ENCODE measurements at regions of chr14 and their contacts with region 1.

Region 1: DNA sequence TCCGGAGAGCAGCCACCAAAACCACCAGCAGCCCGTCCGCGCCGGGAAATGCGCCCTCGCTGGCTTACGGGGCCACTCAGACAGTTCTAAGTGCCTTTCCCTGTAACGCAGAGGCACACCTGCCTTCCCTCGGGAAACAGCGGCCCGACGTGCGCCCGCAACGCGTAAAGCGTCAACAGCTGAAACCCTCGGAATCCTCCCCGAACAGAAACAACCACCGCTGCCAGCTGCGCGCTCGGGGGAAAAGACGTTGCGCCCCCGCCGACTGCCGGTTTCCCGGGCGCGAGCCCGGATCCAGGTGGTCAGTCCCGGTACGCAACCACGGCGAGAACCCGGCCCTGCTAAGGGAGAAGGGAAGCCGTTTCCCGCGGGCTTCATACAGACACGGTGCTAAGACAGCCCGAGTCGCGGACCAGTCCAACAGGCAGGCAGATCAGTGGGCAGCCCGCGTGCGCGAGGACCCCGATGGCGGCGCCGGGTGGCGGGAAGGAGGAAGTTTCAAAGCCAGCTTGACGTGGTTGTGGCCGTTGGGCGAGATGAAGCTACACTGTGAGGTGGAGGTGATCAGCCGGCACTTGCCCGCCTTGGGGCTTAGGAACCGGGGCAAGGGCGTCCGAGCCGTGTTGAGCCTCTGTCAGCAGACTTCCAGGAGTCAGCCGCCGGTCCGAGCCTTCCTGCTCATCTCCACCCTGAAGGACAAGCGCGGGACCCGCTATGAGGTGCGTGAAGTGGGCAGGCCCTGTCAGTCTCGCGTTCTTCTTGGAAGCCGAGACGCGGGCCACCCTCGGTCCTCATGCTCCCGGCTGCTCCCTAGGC is at the start of gene LRR1:
- DNase-seq: peak; percentile 95
- ATAC-seq: peak; percentile 73
- H3K4me3 ChIP-seq: peak within 1 kb of the TSS; percentile 75 to 94 (median 80)
- H3K4me3 Mint-ChIP-seq: peak within 1 kb of the TSS; percentile 99
- H3K27ac ChIP-seq: peak within 1 kb of the TSS; percentile 92 to 97
- H3K27ac Mint-ChIP-seq: peak within 1 kb of the TSS; percentile 98
- H3K4me1 ChIP-seq: peaks cover 33 to 42% of the 10 kb centered on the region in 2 donors
- H3K4me1 Mint-ChIP-seq: peaks cover 55% of the 10 kb centered on the region
- H3K27me3 ChIP-seq: no peaks in the 10 kb centered on the region
- H3K27me3 Mint-ChIP-seq: no peaks in the 10 kb centered on the region
- CTCF ChIP-seq: no peak
- total RNA-seq, gene LRR1: 10.3 and 13.0 TPM in 2 replicates

Region 2: DNA sequence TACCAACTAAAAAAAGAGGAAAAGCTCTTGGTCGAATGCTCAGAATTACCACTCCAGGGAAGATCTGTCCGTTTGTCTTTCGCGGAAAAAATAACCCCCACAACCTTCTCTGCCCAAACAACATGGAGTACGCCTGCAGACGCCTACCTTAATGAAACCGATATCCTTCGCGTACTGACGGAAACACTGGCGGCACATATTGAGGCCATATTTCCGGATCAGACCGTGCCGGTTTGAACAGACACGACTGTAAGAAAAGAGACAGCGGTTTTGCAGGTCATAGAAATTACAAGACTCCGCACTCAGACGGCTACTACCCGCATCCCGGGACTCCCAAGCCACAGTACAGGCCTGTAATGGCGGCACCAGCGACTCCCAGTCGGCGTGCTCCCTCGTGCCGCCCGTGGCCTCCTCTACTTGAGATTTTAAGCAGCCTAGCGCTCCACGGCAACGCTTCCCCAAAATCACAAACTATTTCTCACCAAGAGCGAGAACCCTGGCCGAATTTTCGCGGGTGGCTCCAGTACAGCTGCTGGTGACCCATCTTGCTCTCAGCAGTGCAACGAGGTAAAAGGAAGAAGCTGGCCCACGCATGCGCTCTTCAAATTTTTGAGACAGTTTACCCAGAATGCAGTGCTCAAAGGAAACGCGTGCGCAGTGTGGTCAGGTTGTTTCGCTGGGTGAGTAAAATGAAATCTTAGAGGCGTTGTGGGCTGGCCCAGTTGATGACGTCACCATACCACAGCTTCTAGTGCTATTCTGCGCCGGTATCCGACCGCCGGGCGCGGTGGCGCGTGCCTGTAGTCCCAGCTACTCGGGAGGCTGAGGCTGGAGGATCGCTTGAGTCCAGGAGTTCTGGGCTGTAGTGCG is 12.7 kb before region 1 on chr14 and contains the start of gene RPS29:
- CTCF ChIA-PET with region 1: interaction called, 92 read pairs
- POLR2A ChIA-PET with region 1: interaction called, 43 read pairs
- intact Hi-C with region 1: loop called (anchors 1 kb)
- DNase-seq: peak; percentile 100
- ATAC-seq: peak; percentile 86
- H3K4me3 ChIP-seq: peak within 1 kb of the TSS; percentile 70 to 100 (median 88)
- H3K4me3 Mint-ChIP-seq: peak within 1 kb of the TSS; percentile 88
- H3K27ac ChIP-seq: peak within 1 kb of the TSS; percentile 88 to 95
- H3K27ac Mint-ChIP-seq: peak within 1 kb of the TSS; percentile 100
- H3K4me1 ChIP-seq: peaks cover 17 to 24% of the 10 kb centered on the region in 2 donors
- H3K4me1 Mint-ChIP-seq: peaks cover 46% of the 10 kb centered on the region
- H3K27me3 ChIP-seq: no peaks in the 10 kb centered on the region
- H3K27me3 Mint-ChIP-seq: no peaks in the 10 kb centered on the region
- CTCF ChIP-seq: no peak
- total RNA-seq, gene RPS29: 2,497 and 2,873 TPM in 2 replicates

Region 3: DNA sequence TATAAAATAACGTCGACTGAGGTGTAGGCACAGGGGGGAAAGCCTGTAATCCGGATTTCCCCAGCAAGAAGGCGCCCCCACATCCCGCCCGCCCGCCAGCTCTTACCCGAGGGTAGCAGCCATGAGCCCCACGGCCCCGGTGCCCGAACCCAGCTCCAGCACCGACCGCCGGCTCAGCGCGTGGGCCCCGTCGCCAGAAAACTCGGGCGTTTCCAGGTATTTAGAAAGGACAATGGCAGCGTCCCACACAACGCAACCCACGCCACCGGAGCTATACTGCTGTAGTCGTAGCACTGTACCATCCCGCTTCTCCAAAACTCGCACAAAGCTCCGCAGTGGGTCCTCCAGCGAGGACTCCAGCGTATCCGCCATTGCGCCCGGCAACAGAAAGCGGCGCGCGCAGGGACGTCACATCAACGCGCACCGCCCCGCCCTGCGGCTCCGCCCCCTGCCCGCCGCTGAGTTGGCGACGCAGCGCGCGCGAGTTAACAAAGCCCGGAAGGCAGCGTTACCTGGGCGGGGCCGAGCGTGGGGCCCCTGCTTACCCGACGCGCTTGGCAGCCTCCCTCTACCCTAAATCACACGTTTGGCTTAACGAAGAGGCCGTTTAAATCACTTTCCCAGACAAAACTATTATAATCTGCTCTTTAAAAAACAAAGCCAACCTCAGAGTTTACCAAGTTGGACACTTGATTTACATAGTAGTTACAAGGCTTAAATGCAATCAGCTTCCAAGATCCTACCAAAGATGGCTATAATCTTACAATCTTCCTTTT is 517.7 kb after region 1 on chr14 and contains the start of gene VCPKMT:
- CTCF ChIA-PET with region 1: interaction called, 6 read pairs
- POLR2A ChIA-PET with region 1: no interaction called
- intact Hi-C with region 1: loop called (anchors 5 kb)
- DNase-seq: peak; percentile 97
- ATAC-seq: peak; percentile 97
- H3K4me3 ChIP-seq: peak within 1 kb of the TSS; percentile 69 to 92 (median 87)
- H3K4me3 Mint-ChIP-seq: peak within 1 kb of the TSS; percentile 98
- H3K27ac ChIP-seq: peak within 1 kb of the TSS; percentile 92 to 99
- H3K27ac Mint-ChIP-seq: peak within 1 kb of the TSS; percentile 98
- H3K4me1 ChIP-seq: peaks cover 44 to 45% of the 10 kb centered on the region in 2 donors
- H3K4me1 Mint-ChIP-seq: peaks cover 45% of the 10 kb centered on the region
- H3K27me3 ChIP-seq: no peaks in the 10 kb centered on the region
- H3K27me3 Mint-ChIP-seq: no peaks in the 10 kb centered on the region
- CTCF ChIP-seq: no peak
- total RNA-seq, gene VCPKMT: 22.8 and 27.1 TPM in 2 replicates

Measured in B cell (primary cell).